ENCODE measurements at regions of chr21 and their contacts with region 1.

Region 1: DNA sequence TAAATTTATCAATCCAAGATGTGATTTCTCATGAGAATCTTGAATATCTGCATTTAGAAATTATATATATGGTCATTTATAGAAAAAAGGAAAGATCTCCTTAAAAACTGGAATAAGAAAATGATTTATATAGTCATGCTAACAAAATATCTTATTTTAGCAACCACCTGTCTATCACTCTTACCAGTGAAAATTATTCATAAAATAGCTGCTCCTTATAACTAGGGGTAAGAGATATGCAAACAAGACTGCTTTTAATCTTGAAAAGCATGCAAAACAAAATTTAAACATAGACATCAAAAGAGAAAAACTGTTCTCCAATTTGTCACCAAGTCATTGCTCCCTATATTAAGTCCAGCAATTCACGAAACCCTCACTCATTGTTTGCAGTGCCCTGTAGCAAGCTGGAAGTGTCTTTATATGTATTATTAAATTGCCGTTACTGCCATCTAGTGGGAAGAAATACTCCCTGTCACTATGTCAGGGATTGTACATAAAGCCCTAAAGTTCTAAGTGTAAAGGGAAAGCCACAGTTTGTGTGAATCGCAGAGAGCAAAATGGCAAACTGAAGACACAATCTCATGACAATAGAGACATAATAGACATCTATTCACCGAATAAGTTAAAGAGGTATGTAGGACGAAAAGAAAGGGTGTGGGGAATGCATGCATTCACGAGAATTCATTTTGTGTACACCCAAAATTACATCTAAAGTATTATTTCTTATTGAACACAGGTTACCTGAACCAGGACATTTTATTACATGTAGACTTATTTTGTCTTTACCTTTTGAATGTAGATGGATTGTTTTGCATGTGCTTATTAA is 600.5 kb downstream of the USP25 start:
- DNase-seq: no peak
- ATAC-seq: peak; percentile 81
- H3K4me3 Mint-ChIP-seq: no peak overlapping the region
- H3K27ac Mint-ChIP-seq: no peak overlapping the region
- H3K4me1 Mint-ChIP-seq: peaks cover 3% of the 10 kb centered on the region
- H3K27me3 Mint-ChIP-seq: no peaks in the 10 kb centered on the region

Region 2: DNA sequence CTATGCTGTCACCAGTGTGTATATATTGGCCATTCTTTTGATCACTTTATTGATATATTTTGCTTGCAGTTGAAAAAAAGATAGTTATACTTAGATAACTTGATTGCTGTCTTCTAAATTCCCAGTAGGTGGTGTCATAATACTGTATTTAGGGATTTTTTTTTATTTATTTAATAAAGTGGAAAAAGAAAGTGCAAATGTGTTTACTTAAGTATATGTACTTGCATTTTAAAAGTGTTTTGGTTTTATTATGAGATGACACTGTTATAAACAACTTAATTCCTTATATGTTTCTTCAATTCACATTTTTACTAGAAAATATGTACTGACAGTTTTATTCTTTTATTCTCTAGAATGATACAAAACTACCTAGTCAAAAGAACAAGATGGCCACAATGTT is 435.7 kb before region 1 on chr21:
- CTCF ChIA-PET with region 1: no interaction called
- POLR2A ChIA-PET with region 1: no interaction called
- intact Hi-C with region 1: loop called (anchors 10 kb)
- DNase-seq: no peak
- ATAC-seq: no peak
- H3K4me3 Mint-ChIP-seq: no peak overlapping the region
- H3K27ac Mint-ChIP-seq: no peak overlapping the region
- H3K4me1 Mint-ChIP-seq: no peaks in the 10 kb centered on the region
- H3K27me3 Mint-ChIP-seq: no peaks in the 10 kb centered on the region

Region 3: GRCh38 chr21:16002874-16003466 is 327.3 kb before region 1 on chr21:
- CTCF ChIA-PET with region 1: no interaction called
- POLR2A ChIA-PET with region 1: no interaction called
- intact Hi-C with region 1: loop called in 1 of 2 experiments (anchors 10 kb)
- DNase-seq: no peak
- ATAC-seq: no peak
- H3K4me3 Mint-ChIP-seq: no peak overlapping the region
- H3K27ac Mint-ChIP-seq: no peak overlapping the region
- H3K4me1 Mint-ChIP-seq: no peaks in the 10 kb centered on the region
- H3K27me3 Mint-ChIP-seq: peaks cover 2% of the 10 kb centered on the region

Region 4: GRCh38 chr21:16082038-16082816 is 248.1 kb before region 1 on chr21:
- CTCF ChIA-PET with region 1: interaction called, 17 read pairs
- POLR2A ChIA-PET with region 1: no interaction called
- intact Hi-C with region 1: loop called (anchors 1 kb)
- DNase-seq: no peak
- ATAC-seq: no peak
- H3K4me3 Mint-ChIP-seq: no peak overlapping the region
- H3K27ac Mint-ChIP-seq: no peak overlapping the region
- H3K4me1 Mint-ChIP-seq: no peaks in the 10 kb centered on the region
- H3K27me3 Mint-ChIP-seq: no peaks in the 10 kb centered on the region

Region 5: GRCh38 chr21:16308269-16308668 is 22.0 kb before region 1 on chr21:
- CTCF ChIA-PET with region 1: interaction called, 5 read pairs
- POLR2A ChIA-PET with region 1: no interaction called
- intact Hi-C with region 1: loop called in 1 of 2 experiments (anchors 2 kb)
- DNase-seq: no peak
- ATAC-seq: peak; percentile 97
- H3K4me3 Mint-ChIP-seq: no peak overlapping the region
- H3K27ac Mint-ChIP-seq: no peak overlapping the region
- H3K4me1 Mint-ChIP-seq: peaks cover 12% of the 10 kb centered on the region
- H3K27me3 Mint-ChIP-seq: no peaks in the 10 kb centered on the region

Region 6: GRCh38 chr21:16357994-16358393 is 27.7 kb after region 1 on chr21:
- CTCF ChIA-PET with region 1: no interaction called
- POLR2A ChIA-PET with region 1: no interaction called
- intact Hi-C with region 1: no loop called
- DNase-seq: no peak
- ATAC-seq: no peak
- H3K4me3 Mint-ChIP-seq: no peak overlapping the region
- H3K27ac Mint-ChIP-seq: no peak overlapping the region
- H3K4me1 Mint-ChIP-seq: no peaks in the 10 kb centered on the region
- H3K27me3 Mint-ChIP-seq: no peaks in the 10 kb centered on the region

Region 7: GRCh38 chr21:16473988-16474387 is 143.7 kb after region 1 on chr21:
- CTCF ChIA-PET with region 1: no interaction called
- POLR2A ChIA-PET with region 1: no interaction called
- intact Hi-C with region 1: no loop called
- DNase-seq: no peak
- ATAC-seq: no peak
- H3K4me3 Mint-ChIP-seq: no peak overlapping the region
- H3K27ac Mint-ChIP-seq: no peak overlapping the region
- H3K4me1 Mint-ChIP-seq: no peaks in the 10 kb centered on the region
- H3K27me3 Mint-ChIP-seq: no peaks in the 10 kb centered on the region

Measured in activated CD4-positive, alpha-beta T cell treated with anti-CD3 and anti-CD28 coated beads for 36 hours (primary cell).